GM13977 (cell line): ENCODE measurements at regions of chr17 and their contacts with region 1.

Region 1: DNA sequence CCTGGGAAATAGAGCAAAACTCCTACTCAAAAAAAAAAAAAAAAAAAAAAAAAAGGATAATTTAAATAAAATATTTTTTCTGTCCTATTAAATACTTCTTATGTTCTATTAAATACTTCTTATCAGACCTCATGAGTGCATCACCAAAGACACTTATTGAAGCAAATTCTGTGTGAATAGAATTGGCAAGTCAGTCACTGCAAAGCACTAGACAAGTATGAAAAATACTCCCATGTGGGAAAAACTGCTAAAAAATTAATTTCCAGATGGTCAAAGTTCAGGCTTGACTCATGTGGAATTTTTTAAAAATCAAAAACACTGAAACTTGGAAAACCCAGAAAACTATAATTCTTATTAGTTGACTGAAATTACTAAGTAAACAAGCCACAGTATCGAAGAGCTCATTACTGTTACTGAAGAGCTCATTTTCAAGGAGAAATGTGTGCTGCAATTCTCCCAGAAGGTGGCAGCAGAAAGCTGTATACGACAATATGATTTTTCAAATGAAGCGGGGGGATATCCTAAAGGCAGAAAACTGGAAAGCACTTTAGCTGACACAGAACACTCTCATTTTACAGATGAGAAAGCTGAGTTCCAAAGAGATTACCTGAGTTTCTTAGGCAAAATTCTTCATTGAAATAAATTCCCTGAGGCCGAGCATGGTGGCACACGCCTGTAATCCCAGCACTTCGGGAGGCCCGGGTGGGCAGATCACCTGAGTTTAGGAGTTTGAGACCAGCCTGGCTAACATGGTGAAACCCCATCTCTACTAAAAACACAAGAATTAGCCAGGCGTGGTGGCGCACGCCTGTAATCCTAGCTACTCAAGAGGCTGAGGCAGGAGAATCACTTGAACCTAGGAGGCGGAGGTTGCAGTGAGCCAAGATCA is 15.9 kb upstream of the FBXO47 start:
- DNase-seq: peak; percentile 81
- CTCF ChIP-seq: peak; percentile 85

Region 2: GRCh38 chr17:38789185-38789584 is 193.9 kb before region 1 on chr17:
- in situ Hi-C with region 1: no loop called
- DNase-seq: no peak
- CTCF ChIP-seq: no peak

Region 3: DNA sequence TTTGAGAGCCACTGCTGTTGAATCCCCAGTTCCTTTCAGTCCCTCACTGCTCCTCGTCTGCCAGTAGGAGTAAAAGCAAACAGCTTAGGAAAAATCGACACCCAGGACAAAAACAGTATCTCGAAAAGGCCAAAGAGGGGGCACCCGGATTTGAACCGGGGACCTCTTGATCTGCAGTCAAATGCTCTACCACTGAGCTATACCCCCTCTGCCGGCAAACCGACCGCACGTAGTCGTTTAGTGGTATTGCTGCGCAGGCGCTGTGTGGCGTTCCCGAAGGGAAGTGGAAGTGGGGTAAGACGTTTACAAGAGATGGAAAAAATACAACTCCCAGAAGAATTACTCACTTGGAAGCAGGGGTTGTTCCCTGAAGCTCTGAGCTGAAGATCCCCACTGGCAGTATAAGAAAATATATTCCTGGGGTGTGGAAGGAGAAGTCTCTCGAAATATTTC is 170.5 kb after region 1 on chr17:
- in situ Hi-C with region 1: loop called (anchors 10 kb)
- DNase-seq: peak; percentile 80
- CTCF ChIP-seq: peak; percentile 12